ENCODE measurements at regions of chr2 and their contacts with region 1.

Region 1: DNA sequence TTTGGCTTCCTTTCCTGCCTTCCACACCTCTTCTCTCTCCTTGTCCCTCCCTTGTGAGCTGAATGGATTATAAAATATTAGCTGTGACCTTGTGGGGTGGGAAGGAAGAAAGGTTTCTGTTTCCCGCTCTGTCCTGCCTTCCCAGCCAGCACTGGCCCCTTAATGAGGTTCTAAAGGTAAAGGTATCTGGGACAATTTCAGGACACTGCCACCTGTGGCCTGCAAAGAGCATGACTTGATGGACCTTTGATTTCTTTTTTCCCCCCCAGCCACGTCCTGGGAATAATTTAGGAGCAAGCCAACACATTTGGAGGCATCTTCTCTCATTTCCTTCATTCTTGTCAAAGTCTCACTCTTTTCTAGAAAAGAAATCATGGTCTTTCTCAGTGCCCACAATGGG is 246.7 kb upstream of the EPAS1 start:
- DNase-seq: no peak
- ATAC-seq: no peak
- H3K4me3 ChIP-seq: no peak overlapping the region
- H3K27ac ChIP-seq: no peak overlapping the region
- H3K4me1 ChIP-seq: peaks cover 0 to 2% of the 10 kb centered on the region in 2 donors
- H3K27me3 ChIP-seq: no peaks in the 10 kb centered on the region

Region 2: DNA sequence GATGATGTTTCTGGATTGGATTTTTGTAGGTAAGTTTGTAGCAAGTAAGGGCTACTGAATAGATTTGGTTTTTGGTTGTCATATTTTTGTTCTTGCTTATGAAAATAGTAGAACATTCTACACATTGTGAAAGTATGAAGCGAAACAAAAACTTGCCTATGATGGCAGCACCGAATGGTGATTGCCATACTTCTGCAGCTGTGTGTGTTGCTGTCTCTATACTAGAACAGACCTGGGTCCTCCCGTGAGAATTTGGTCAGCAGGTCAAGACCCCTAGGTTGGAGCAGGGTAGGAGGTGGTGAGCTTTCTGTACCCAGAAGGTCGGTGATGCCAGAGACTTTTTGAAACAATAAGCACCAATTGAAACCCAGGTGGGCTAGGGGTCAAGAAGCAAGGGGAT is 76.4 kb before region 1 on chr2:
- intact Hi-C with region 1: no loop called
- DNase-seq: no peak
- ATAC-seq: no peak
- H3K4me3 ChIP-seq: no peak overlapping the region
- H3K27ac ChIP-seq: no peak overlapping the region
- H3K4me1 ChIP-seq: no peaks in the 10 kb centered on the region
- H3K27me3 ChIP-seq: no peaks in the 10 kb centered on the region

Region 3: GRCh38 chr2:46010925-46011490 is 39.5 kb before region 1 on chr2:
- intact Hi-C with region 1: loop called (anchors 5 kb)
- DNase-seq: no peak
- ATAC-seq: no peak
- H3K4me3 ChIP-seq: no peak overlapping the region
- H3K27ac ChIP-seq: no peak overlapping the region
- H3K4me1 ChIP-seq: peaks cover 0 to 8% of the 10 kb centered on the region in 2 donors
- H3K27me3 ChIP-seq: no peaks in the 10 kb centered on the region

Region 4: DNA sequence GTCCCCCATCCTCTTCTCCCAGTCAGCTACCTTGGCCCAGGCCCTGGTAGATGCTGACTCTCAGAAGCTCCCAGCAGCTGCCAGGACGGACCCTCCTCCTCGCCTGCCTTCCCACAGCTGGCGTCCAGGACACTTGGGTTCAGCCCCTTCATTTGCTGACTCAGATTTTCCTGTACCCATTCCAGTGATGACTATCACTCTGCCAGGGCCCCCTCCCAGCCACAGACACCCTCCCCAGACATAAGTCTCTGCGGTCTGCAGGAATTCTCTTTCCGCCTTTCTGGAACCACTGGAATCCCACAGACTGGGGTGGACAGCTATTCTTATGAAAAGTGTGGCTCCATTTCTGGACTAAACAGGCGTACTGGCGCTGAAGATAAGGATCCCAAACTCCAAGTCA is 13.6 kb before region 1 on chr2:
- intact Hi-C with region 1: no loop called
- DNase-seq: peak; percentile 74 to 81
- ATAC-seq: peak; percentile 63
- H3K4me3 ChIP-seq: no peak overlapping the region
- H3K27ac ChIP-seq: no peak overlapping the region
- H3K4me1 ChIP-seq: no peaks in the 10 kb centered on the region
- H3K27me3 ChIP-seq: no peaks in the 10 kb centered on the region

Measured in aorta (tissue), 5 donors.